ENCODE measurements at regions of chr12 and their contacts with region 1.

Region 1: GRCh38 chr12:123427036-123427769 is 9.3 kb downstream of the RILPL2 start:
- DNase-seq: peak; percentile 98
- H3K4me3 ChIP-seq: peak overlapping the region; percentile 39
- H3K27ac ChIP-seq: peak overlapping the region; percentile 91
- H3K4me1 ChIP-seq: peaks cover 53% of the 10 kb centered on the region
- CTCF ChIP-seq: no peak

Region 2: DNA sequence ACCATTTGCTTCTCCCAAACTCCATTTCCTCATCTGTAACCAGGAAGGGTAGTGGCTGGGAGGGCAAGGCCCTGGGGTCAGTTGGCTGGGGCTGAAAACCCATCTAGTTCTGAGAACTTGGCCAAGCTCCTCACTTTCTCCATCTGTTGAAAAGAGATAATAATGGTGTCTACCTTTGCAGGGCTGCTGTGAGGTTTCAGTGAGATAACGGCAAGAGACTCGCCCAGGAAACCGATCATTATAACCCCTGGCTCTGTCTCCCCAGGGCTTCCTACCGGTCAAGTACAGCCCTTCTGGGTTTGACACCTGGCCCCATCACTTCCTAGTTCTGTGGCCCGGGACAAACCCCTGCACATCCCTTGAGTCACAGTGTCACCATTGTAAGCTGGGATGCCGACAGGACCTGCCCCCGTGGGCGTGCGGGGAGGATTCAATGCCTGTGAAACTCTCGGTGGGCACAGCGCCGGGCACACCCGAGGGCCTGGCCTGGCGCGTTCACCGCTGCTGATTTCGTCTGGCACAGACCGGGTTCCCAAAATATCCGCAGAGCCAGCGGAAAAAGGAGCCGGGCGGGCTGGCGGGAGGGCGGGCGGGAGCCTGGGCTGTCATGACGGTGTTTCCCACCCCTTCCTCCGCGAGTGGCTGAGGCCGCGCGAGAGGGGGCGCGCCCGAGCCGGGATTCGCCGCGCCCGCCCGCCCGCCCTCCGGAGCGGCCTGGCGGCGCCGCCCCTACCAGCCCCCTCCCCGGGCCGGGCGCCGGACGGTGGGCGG is 38.8 kb before region 1 on chr12:
- CTCF ChIA-PET with region 1: no interaction called
- POLR2A ChIA-PET with region 1: no interaction called
- intact Hi-C with region 1: loop called (anchors 2 kb)
- DNase-seq: peak; percentile 83
- H3K4me3 ChIP-seq: peak overlapping the region; percentile 80
- H3K27ac ChIP-seq: peak overlapping the region; percentile 71
- H3K4me1 ChIP-seq: peaks cover 45% of the 10 kb centered on the region
- CTCF ChIP-seq: no peak

Region 3: GRCh38 chr12:123410041-123410412 is 17.2 kb before region 1 on chr12:
- CTCF ChIA-PET with region 1: no interaction called
- POLR2A ChIA-PET with region 1: interaction called, 11 read pairs
- intact Hi-C with region 1: no loop called
- DNase-seq: no peak
- H3K4me3 ChIP-seq: no peak overlapping the region
- H3K27ac ChIP-seq: no peak overlapping the region
- H3K4me1 ChIP-seq: peaks cover 4% of the 10 kb centered on the region
- CTCF ChIP-seq: no peak

Region 4: DNA sequence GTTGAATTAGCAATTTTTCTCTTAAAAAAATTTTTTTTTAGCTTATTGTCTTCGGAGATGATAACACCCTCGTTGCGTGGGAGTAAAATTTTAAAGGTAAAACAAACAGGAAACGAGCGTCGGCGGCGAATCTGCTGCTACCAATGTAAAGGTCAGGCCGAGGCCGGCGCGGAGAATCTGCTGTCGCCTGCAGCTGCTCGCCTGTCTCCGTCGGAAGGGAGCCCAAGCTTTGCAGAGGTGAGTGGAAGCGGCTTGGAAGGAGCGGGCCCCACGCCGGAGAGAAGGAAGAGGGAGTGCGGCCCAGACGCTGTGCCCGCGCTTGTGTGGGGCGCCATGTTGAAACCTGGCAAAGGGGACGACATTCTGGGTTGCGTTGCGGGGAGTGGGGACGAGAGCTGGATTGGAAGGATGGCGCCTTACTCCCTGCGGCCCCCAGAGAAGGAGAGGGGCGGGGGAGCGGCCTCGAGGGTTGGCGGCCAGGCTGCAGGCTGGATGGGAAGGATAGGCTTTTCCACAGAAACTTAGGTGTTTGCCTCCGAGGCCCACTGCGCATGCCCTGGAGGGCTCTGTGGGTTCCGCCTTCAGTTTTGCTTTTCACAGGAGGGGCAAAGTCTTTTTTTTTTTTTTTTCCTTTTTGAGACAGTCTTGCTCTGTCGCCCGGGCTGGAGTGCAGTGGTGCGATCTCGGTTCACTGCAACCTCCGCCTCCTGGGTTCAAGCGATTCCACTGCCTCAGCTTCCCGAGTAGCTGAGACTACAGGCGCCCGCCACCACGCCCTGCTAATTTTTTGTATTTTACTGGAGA is 31.0 kb after region 1 on chr12 and contains the start of gene SNRNP35:
- CTCF ChIA-PET with region 1: no interaction called
- POLR2A ChIA-PET with region 1: interaction called, 9 read pairs
- intact Hi-C with region 1: loop called (anchors 1 kb)
- DNase-seq: peak; percentile 87
- H3K4me3 ChIP-seq: peak within 1 kb of the TSS; percentile 74
- H3K27ac ChIP-seq: peak within 1 kb of the TSS; percentile 91
- H3K4me1 ChIP-seq: peaks cover 14% of the 10 kb centered on the region
- CTCF ChIP-seq: no peak
- total RNA-seq, gene SNRNP35: 31.3 and 43.7 TPM in 2 replicates

Measured in OCI-LY7 (cell line).